Transverse colon (tissue), 4 donors: ENCODE measurements at regions of chr11 and their contacts with region 1.

Region 1: GRCh38 chr11:114159802-114160632 is 100.5 kb downstream of the ZBTB16 start:
- DNase-seq: peak; percentile 99
- H3K4me3 ChIP-seq: peak overlapping the region in 1 of 4 donors; percentile 30
- H3K27ac ChIP-seq: peak overlapping the region; percentile 94 to 96 (median 96)
- H3K4me1 ChIP-seq: peaks cover 74 to 83% (median 79%) of the 10 kb centered on the region in 4 donors
- H3K27me3 ChIP-seq: no peaks in the 10 kb centered on the region
- CTCF ChIP-seq: peak in 2 of 5 experiments; percentile 2 to 24
- EP300 ChIP-seq: peak; percentile 100
- POLR2A ChIP-seq: peak; percentile 71

Region 2: DNA sequence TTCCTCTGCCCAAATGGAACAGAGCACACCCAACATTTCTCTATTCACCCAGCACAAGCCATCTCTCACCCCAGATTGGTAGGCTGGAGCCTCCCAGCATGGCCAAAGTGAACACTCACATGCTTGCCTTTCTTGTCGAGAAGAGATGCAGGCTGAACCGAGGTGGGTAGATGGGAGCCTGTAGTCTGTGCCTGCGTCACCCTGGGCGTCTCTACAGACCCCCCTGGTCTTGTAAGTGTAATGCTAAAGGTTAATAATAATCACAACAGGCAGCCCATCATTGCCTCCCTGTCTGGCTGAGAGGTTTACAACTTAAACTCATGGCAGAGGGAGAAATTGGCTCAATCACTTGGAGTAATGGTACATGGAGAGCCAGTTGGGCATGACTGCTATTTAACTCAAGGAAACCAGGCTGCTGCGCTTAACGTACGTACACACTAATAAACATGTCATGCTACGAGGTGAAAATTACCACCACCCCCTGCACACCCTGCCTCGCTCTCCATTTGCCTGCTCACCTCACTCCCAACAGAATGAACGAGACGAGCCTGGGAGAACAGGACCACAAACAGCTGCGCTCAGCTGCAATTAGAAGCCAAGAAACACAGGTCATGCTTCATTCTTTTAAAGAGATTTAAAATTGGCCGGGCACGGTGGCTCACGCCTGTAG is 109.6 kb before region 1 on chr11:
- in situ Hi-C with region 1: no loop called
- intact Hi-C with region 1: loop called (anchors 2 kb)
- DNase-seq: no peak
- H3K4me3 ChIP-seq: no peak overlapping the region
- H3K27ac ChIP-seq: peak overlapping the region in 3 of 4 donors; percentile 25 to 70 (median 53)
- H3K4me1 ChIP-seq: peaks cover 0 to 12% (median 3%) of the 10 kb centered on the region in 4 donors
- H3K27me3 ChIP-seq: no peaks in the 10 kb centered on the region
- CTCF ChIP-seq: no peak
- EP300 ChIP-seq: peak; percentile 98
- POLR2A ChIP-seq: no peak

Region 3: DNA sequence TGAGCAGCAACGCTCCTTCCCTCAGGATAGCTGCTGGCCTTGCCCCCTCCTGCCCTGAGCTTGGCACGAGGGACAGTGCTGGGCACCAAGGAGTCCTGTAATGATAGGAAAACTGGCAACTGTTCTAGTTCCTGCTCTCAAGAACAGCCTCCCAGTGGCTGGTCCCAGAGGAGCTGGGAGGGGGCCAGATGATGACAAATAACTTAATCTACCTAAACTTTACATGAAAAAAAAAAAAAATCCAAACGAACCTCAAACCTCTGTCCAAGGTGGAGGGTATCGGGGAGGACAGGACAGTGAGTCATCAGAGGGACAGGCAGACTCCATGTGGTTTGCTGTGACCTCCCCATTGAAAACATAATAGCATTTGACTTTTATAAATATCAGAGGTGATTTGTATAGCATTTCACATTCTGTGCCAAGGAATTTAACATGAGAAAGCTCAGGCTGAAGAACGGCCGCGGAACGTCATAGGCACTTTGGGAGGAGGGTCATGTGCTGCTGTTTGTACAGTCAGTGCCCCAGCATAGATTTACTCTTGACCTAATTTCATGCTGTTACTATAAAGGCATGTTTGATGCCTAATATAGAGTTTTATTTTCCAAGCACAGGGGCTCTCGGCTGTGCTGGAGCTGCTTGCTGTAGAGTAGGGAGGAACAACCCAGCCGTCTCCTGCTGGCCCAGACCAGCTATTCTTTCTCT is 37.9 kb after region 1 on chr11:
- in situ Hi-C with region 1: no loop called
- intact Hi-C with region 1: loop called (anchors 5 kb)
- DNase-seq: peak; percentile 63
- H3K4me3 ChIP-seq: no peak overlapping the region
- H3K27ac ChIP-seq: peak overlapping the region; percentile 84 to 91 (median 88)
- H3K4me1 ChIP-seq: peaks cover 32 to 76% (median 43%) of the 10 kb centered on the region in 4 donors
- H3K27me3 ChIP-seq: no peaks in the 10 kb centered on the region
- CTCF ChIP-seq: no peak
- EP300 ChIP-seq: peak; percentile 99
- POLR2A ChIP-seq: peak; percentile 28

Region 4: GRCh38 chr11:114317787-114318137 is 157.7 kb after region 1 on chr11:
- in situ Hi-C with region 1: no loop called
- intact Hi-C with region 1: no loop called
- DNase-seq: no peak
- H3K4me3 ChIP-seq: no peak overlapping the region
- H3K27ac ChIP-seq: peak overlapping the region in 2 of 4 donors; percentile 25 to 42
- H3K4me1 ChIP-seq: peaks cover 0 to 24% (median 8%) of the 10 kb centered on the region in 4 donors
- H3K27me3 ChIP-seq: no peaks in the 10 kb centered on the region
- CTCF ChIP-seq: peak in 1 of 5 experiments; percentile 12
- EP300 ChIP-seq: no peak
- POLR2A ChIP-seq: no peak